CD8-positive, alpha-beta T cell (primary cell): ENCODE measurements at regions of chr9 and their contacts with region 1.

Region 1: GRCh38 chr9:113578882-113579282 is 115.4 kb downstream of the RGS3 start:
- DNase-seq: peak; percentile 50 to 92 (median 87)
- ATAC-seq: peak; percentile 56
- H3K4me3 ChIP-seq: peak overlapping the region; percentile 15 to 24
- H3K4me3 Mint-ChIP-seq: peak overlapping the region; percentile 79
- H3K27ac ChIP-seq: peak overlapping the region; percentile 37 to 76
- H3K27ac Mint-ChIP-seq: peak overlapping the region; percentile 94
- H3K4me1 ChIP-seq: peaks cover 57% of the 10 kb centered on the region
- H3K4me1 Mint-ChIP-seq: peaks cover 81% of the 10 kb centered on the region
- H3K27me3 ChIP-seq: no peaks in the 10 kb centered on the region
- H3K27me3 Mint-ChIP-seq: no peaks in the 10 kb centered on the region
- CTCF ChIP-seq: no peak

Region 2: GRCh38 chr9:113150670-113151611 is 427.9 kb before region 1 on chr9 and contains the start of gene SLC31A2:
- CTCF ChIA-PET with region 1: no interaction called
- POLR2A ChIA-PET with region 1: no interaction called
- intact Hi-C with region 1: loop called in 1 of 2 experiments (anchors 5 kb)
- DNase-seq: peak; percentile 61 to 91 (median 85)
- ATAC-seq: peak; percentile 94
- H3K4me3 ChIP-seq: peak within 1 kb of the TSS; percentile 83 to 88
- H3K4me3 Mint-ChIP-seq: peak within 1 kb of the TSS; percentile 83
- H3K27ac ChIP-seq: peak within 1 kb of the TSS; percentile 38 to 52
- H3K27ac Mint-ChIP-seq: peak within 1 kb of the TSS; percentile 41
- H3K4me1 ChIP-seq: peaks cover 20% of the 10 kb centered on the region
- H3K4me1 Mint-ChIP-seq: peaks cover 35% of the 10 kb centered on the region
- H3K27me3 ChIP-seq: no peaks in the 10 kb centered on the region
- H3K27me3 Mint-ChIP-seq: no peaks in the 10 kb centered on the region
- CTCF ChIP-seq: peak; percentile 33
- total RNA-seq, gene SLC31A2: 5.4 to 6.0 TPM

Region 3: GRCh38 chr9:113446323-113446740 is 132.6 kb before region 1 on chr9:
- CTCF ChIA-PET with region 1: interaction called, 267 read pairs
- POLR2A ChIA-PET with region 1: interaction called, 3 read pairs
- intact Hi-C with region 1: loop called (anchors 2 kb)
- DNase-seq: peak in 2 of 9 experiments; percentile 56 to 66
- ATAC-seq: peak; percentile 34
- H3K4me3 ChIP-seq: no peak overlapping the region
- H3K4me3 Mint-ChIP-seq: no peak overlapping the region
- H3K27ac ChIP-seq: no peak overlapping the region
- H3K27ac Mint-ChIP-seq: no peak overlapping the region
- H3K4me1 ChIP-seq: no peaks in the 10 kb centered on the region
- H3K4me1 Mint-ChIP-seq: peaks cover 2% of the 10 kb centered on the region
- H3K27me3 ChIP-seq: no peaks in the 10 kb centered on the region
- H3K27me3 Mint-ChIP-seq: no peaks in the 10 kb centered on the region
- CTCF ChIP-seq: peak; percentile 92

Region 4: GRCh38 chr9:113523421-113524236 is 55.3 kb before region 1 on chr9:
- CTCF ChIA-PET with region 1: interaction called, 11 read pairs
- POLR2A ChIA-PET with region 1: interaction called, 11 read pairs
- intact Hi-C with region 1: loop called in 1 of 2 experiments (anchors 1 kb)
- DNase-seq: peak in 8 of 9 experiments; percentile 46 to 87 (median 66)
- ATAC-seq: peak; percentile 27
- H3K4me3 ChIP-seq: peak overlapping the region; percentile 31 to 40
- H3K4me3 Mint-ChIP-seq: peak overlapping the region; percentile 80
- H3K27ac ChIP-seq: peak overlapping the region; percentile 19 to 78
- H3K27ac Mint-ChIP-seq: peak overlapping the region; percentile 94
- H3K4me1 ChIP-seq: peaks cover 97% of the 10 kb centered on the region
- H3K4me1 Mint-ChIP-seq: peaks cover 92% of the 10 kb centered on the region
- H3K27me3 ChIP-seq: no peaks in the 10 kb centered on the region
- H3K27me3 Mint-ChIP-seq: no peaks in the 10 kb centered on the region
- CTCF ChIP-seq: no peak

Region 5: DNA sequence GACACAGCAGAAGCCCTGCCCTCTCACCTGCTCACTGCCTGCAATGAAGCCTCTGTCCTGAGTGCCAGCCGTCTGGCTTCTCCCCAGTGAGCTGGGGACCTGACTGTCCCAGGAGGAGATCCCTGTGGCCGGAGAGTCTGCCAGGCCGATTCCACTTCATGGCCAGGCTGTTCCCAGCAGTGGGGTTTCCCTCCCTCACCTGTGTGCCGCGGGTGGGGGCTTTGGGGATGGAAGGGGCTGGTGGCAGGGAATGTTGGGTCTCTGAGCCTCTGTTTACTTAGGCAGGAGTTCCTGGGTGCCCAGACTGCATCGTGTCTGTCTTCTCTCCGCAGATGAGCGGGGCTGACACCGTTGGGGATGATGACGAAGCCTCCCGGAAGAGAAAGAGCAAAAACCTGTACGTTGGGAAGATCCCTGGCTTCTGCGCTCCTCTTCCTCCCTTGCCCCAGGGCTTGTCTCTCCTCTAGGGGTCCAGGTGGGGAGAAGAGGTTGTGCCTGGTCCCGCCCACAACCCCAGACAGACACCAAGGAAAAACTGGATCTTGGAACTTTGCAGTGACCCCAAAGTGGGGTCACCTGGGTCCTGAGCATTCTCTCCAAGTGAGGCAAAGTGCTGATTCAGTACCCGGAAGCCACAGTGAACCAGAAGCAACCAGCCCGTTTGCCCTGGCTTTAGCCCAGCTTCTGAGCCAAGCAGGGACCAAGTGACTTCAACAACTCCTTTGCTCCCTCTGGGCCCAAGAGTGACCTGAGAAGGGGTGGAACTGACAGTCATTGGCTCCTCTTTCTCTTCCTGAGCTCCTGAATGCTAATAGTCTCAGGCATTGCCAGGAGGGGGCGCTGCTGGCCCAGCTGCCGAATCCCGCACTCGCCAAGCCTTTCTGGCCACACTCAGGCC is 12.4 kb after region 1 on chr9:
- CTCF ChIA-PET with region 1: interaction called, 29 read pairs
- POLR2A ChIA-PET with region 1: interaction called, 9 read pairs
- intact Hi-C with region 1: loop called in 1 of 2 experiments (anchors 1 kb)
- DNase-seq: peak in 4 of 9 experiments; percentile 48 to 60 (median 53)
- ATAC-seq: no peak
- H3K4me3 ChIP-seq: no peak overlapping the region
- H3K4me3 Mint-ChIP-seq: no peak overlapping the region
- H3K27ac ChIP-seq: no peak overlapping the region
- H3K27ac Mint-ChIP-seq: no peak overlapping the region
- H3K4me1 ChIP-seq: peaks cover 6% of the 10 kb centered on the region
- H3K4me1 Mint-ChIP-seq: peaks cover 27% of the 10 kb centered on the region
- H3K27me3 ChIP-seq: no peaks in the 10 kb centered on the region
- H3K27me3 Mint-ChIP-seq: no peaks in the 10 kb centered on the region
- CTCF ChIP-seq: peak; percentile 50

Region 6: GRCh38 chr9:114238891-114239875 is 660.3 kb after region 1 on chr9:
- CTCF ChIA-PET with region 1: no interaction called
- POLR2A ChIA-PET with region 1: no interaction called
- intact Hi-C with region 1: no loop called
- DNase-seq: no peak
- ATAC-seq: no peak
- H3K4me3 ChIP-seq: no peak overlapping the region
- H3K4me3 Mint-ChIP-seq: no peak overlapping the region
- H3K27ac ChIP-seq: no peak overlapping the region
- H3K27ac Mint-ChIP-seq: no peak overlapping the region
- H3K4me1 ChIP-seq: no peaks in the 10 kb centered on the region
- H3K4me1 Mint-ChIP-seq: no peaks in the 10 kb centered on the region
- H3K27me3 ChIP-seq: no peaks in the 10 kb centered on the region
- H3K27me3 Mint-ChIP-seq: peaks cover 8% of the 10 kb centered on the region
- CTCF ChIP-seq: no peak